ENCODE measurements at regions of chrX and their contacts with region 1.

Region 1: DNA sequence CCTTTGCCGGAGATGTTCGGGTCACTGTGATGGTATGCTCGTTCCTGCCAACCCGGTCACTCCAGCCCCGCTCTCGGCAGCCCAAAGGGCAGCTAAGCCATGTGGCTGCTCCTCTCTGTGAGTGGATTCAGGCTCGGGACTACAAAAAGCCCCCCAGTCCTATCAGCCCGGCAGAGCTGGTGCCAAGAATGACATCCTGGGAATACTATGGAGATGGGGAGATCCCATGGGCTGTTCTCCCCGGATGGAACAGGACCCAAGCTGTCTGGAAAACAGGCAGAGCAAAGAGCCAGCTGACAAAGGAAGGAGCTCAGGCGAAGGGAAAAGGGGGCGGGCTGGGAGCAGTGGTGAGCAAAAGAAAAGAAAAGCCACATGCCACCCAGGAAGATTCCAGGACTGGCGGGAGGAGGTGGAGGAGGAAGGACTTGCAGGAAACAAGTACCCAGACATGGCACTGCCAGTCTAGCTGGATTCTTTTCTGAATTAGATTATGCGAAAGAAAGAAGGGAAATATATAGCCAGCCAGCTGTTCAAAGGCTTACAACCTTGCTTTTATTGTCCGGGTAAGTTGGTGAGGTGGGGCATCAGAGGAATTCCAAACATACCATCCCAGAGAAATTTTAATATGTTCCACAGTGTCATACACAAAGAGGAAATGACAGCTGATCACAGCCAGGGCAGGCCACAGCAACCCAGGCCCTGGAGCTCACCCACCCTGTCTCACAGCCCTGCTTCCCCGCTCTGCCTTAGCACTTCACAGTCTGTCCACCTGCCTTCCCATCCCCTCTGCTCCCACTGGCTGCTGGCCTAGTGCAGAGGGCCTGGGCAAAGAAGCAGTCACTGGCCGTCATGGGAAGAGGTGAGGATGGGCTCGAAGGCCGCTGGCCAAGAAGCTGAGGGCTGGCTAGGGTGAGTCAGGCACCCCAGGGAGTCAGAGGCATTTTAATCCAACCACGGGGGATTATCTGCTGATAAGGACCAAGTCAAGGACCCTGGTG is 3.4 kb downstream of the NDP start:
- H3K4me3 Mint-ChIP-seq: no peak overlapping the region
- H3K27ac Mint-ChIP-seq: no peak overlapping the region
- H3K4me1 Mint-ChIP-seq: peaks cover 21% of the 10 kb centered on the region
- H3K27me3 Mint-ChIP-seq: peaks cover 4% of the 10 kb centered on the region

Region 2: DNA sequence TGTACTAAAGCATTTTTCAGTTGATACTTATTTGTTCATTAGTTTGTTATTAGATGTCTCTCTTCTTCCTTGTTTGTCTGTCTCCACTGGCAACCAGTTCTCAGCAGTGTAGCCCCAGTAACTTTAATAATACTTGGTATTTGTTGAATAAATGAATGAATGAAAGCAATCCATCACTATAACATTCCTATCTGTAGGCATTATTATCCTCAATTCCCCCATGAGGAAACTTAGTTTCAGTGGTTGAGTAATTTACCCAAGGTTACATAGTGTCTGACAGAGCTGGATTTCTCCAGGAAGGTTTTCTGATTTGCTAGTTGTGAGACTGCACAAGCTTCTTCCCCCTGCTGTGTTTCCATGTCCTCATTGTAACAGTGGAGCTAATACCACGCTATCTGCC is 59.8 kb before region 1 on chrX:
- intact Hi-C with region 1: no loop called
- H3K4me3 Mint-ChIP-seq: no peak overlapping the region
- H3K27ac Mint-ChIP-seq: no peak overlapping the region
- H3K4me1 Mint-ChIP-seq: no peaks in the 10 kb centered on the region
- H3K27me3 Mint-ChIP-seq: no peaks in the 10 kb centered on the region

Region 3: DNA sequence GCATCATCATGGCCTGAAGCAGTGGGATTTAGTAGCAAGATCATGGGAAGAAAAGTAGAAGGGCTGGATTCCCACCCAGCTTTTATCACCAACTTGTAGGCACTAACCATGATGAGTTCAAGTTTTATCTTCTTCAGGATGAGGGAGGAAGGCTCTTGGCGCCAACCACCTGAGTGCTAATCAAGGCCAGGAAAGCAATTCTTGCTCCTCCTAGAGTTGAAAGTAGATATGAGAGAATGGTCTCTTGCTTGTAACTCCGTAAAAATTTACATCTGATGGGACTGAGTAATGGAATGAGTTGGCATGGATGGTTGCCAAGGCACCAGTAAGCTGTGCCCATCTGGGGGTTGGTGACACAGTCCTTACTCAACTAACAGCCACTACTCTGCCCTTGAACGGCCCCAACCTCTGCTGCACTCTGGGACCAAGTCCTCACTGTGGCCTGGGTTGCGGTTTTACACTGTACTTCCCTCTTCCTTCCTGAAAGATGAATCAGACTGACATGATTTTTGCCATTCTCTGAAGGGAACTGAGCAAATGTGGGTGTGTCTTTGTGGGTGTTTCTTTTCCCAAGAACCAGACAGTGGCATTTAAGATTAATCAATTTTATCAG is 42.8 kb after region 1 on chrX:
- intact Hi-C with region 1: loop called (anchors 5 kb)
- H3K4me3 Mint-ChIP-seq: peak overlapping the region; percentile 13
- H3K27ac Mint-ChIP-seq: peak overlapping the region; percentile 69
- H3K4me1 Mint-ChIP-seq: peaks cover 25% of the 10 kb centered on the region
- H3K27me3 Mint-ChIP-seq: no peaks in the 10 kb centered on the region

Region 4: GRCh38 chrX:44025555-44025954 is 55.8 kb after region 1 on chrX:
- intact Hi-C with region 1: loop called (anchors 5 kb)
- H3K4me3 Mint-ChIP-seq: no peak overlapping the region
- H3K27ac Mint-ChIP-seq: peak overlapping the region; percentile 30
- H3K4me1 Mint-ChIP-seq: peaks cover 25% of the 10 kb centered on the region
- H3K27me3 Mint-ChIP-seq: no peaks in the 10 kb centered on the region